Right lobe of liver (tissue), 6 donors: ENCODE measurements at regions of chr12 and their contacts with region 1.

Region 1: DNA sequence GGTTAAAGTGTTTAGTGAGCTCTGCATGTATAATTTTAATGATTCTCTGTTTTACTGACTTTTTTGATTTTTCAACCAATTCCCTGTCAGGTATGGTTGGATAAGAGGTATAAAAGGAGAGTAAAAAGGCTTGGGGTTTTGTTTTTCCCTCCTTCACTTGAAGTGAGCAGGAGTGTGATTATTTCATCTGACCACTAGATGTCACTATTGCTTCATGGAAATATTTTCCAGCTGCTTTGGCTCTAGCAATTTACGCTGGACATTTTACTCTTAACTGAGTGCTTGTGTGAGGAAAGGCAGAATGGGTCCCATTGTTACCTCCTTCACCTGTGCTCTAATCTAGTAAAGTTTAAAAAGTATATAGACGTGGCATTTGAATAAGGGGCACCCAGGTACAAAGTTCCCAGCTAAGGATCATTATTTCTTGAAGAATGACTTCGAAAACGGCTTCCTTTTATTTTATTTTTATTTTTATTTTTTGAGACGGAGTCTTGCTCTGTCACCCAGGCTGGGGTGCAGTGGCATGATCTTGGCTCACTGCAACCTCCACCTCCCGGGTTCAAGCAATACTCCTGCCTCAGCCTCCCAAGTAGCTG is 66.5 kb downstream of the TBC1D30 start:
- DNase-seq: no peak
- ATAC-seq: peak; percentile 86 to 92 (median 88)
- H3K4me3 ChIP-seq: no peak overlapping the region
- H3K27ac ChIP-seq: no peak overlapping the region
- H3K4me1 ChIP-seq: no peaks in the 10 kb centered on the region
- H3K27me3 ChIP-seq: no peaks in the 10 kb centered on the region
- CTCF ChIP-seq: peak; percentile 81 to 94 (median 85)
- POLR2A ChIP-seq: no peak

Region 2: DNA sequence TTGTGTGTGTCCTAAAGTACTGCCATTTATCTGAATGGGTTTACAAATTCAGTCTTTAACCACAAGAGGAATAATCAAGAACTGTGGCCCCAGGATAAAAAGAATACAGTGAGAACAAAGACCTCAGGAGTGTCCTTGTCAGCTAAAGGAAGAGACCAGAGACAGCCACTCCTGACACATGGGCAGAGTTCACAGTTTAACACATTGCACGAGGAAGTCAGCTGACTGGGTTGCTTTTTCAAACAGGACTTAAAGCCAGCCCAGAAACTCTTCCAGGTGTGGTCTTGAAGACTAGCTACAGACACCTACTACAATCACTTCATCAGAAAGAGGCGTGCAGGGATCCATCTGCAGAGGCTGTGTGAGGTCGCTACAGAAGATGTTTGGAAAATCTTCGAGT is 174.6 kb before region 1 on chr12:
- intact Hi-C with region 1: no loop called
- DNase-seq: no peak
- ATAC-seq: peak in 1 of 4 donors; percentile 14
- H3K4me3 ChIP-seq: no peak overlapping the region
- H3K27ac ChIP-seq: no peak overlapping the region
- H3K4me1 ChIP-seq: no peaks in the 10 kb centered on the region
- H3K27me3 ChIP-seq: no peaks in the 10 kb centered on the region
- CTCF ChIP-seq: no peak
- POLR2A ChIP-seq: no peak

Region 3: DNA sequence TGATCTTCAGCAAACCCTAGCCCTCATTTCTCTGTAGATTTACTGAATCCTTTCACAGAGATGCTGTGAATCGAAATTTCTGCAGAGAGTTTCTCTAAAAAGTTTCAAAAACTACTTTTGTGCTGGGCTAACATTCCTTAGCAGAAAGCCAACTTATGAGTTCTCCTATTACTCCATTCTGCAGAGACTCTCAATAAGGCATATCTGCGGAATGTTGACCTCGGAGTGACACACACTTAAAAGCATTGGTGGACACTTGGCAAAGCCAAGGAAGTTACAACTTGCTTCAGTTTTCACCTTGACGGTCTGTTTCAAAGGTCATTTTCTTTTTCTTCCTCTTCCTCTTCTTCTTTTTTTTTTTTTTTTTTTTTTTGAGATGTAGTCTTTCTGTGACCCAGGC is 154.3 kb after region 1 on chr12:
- intact Hi-C with region 1: no loop called
- DNase-seq: no peak
- ATAC-seq: no peak
- H3K4me3 ChIP-seq: no peak overlapping the region
- H3K27ac ChIP-seq: no peak overlapping the region
- H3K4me1 ChIP-seq: no peaks in the 10 kb centered on the region
- H3K27me3 ChIP-seq: no peaks in the 10 kb centered on the region
- CTCF ChIP-seq: no peak
- POLR2A ChIP-seq: no peak

Region 4: GRCh38 chr12:65229441-65229840 is 338.5 kb after region 1 on chr12:
- intact Hi-C with region 1: loop called in 1 of 2 experiments (anchors 10 kb)
- DNase-seq: no peak
- ATAC-seq: no peak
- H3K4me3 ChIP-seq: no peak overlapping the region
- H3K27ac ChIP-seq: no peak overlapping the region
- H3K4me1 ChIP-seq: no peaks in the 10 kb centered on the region
- H3K27me3 ChIP-seq: no peaks in the 10 kb centered on the region
- CTCF ChIP-seq: no peak
- POLR2A ChIP-seq: no peak